Left cardiac atrium (tissue), 4 donors: ENCODE measurements at regions of chr16 and their contacts with region 1.

Region 1: DNA sequence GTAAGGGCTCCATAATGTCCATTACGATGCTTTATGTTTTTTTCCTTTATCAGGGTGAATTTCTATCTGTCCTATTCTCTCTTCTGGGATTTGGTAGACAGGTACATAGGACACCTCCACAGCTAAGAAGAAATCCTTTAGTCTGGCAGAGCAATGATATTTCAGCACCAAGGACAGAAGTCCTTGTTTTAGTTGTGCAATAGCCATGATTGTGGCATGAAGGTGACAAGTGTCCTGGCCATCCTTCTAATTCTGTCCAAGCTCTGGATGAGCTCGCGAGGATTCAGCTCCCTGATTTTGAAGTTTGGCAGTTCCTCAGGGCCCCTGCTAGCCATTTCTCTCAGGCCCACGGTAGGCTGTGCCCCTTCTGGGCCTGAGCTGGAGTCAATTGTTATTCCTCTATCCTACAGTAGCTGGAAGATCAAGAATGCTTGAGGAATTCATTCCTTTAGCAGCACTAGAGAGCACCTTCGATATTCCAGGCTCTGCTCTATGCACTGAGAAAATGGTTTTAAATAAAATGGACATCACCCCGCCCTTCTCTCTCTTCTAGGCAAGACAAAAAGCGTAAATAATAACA is 320.8 kb downstream of the XYLT1 start:
- DNase-seq: no peak
- ATAC-seq: no peak

Region 2: DNA sequence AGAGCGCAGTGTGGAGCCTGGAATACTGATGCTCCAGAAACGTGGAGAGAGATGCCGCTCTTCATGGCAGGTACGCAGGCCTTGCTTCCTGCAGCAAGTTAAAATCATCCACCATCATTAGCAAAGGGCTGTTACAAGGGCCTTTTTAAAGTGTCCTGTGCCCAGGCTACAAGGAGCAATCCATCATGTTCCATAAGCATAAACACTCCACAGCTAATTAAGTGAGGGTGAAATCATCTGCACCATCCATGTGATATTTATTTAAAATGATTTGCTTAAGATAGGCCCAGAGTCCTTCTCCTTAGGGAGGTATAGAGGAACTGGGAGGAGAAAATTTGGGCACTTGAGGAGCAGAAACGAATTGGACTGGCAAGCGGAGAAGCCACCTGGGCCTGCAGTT is 51.3 kb before region 1 on chr16:
- intact Hi-C with region 1: loop called in 1 of 2 experiments (anchors 10 kb)
- DNase-seq: no peak
- ATAC-seq: no peak